ENCODE measurements at regions of chr4 and their contacts with region 1.

Region 1: DNA sequence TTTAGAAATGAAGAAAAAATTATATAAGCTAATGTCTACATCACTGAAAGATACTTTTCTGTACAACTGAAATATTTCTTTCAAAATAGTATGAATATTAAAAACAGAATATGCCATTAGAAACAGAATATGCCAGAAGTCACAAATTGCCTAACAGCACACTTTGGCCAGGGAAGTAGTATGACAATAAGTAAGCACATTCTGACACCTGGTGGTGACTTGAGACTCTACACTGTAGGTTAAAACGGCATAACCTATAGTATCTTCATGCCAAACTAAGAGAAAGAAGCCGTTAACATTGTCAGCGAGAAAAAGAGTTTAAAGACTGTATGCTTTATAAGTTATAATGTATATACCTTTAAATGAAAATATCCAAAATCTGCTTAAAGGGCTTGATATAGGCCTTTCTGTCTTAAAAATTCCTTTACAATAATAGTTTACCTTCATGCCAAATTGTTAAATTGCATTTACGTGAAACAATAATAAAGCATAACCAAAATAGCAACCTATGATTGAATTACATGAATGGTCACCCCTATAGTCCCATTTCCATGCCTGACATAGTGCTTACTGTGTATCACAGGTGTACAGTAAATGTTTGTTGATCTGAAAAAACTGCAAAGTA is 32.8 kb downstream of the FAM13A start:
- DNase-seq: peak; percentile 38
- ATAC-seq: peak; percentile 87
- H3K4me3 ChIP-seq: no peak overlapping the region
- H3K27ac ChIP-seq: no peak overlapping the region
- H3K4me1 ChIP-seq: no peaks in the 10 kb centered on the region
- H3K27me3 ChIP-seq: no peaks in the 10 kb centered on the region
- CTCF ChIP-seq: peak; percentile 58; the same call in 1 of the 2 replicates

Region 2: GRCh38 chr4:88526221-88526815 is 497.8 kb before region 1 on chr4:
- CTCF ChIA-PET with region 1: no interaction called
- POLR2A ChIA-PET with region 1: no interaction called
- in situ Hi-C with region 1: no loop called
- intact Hi-C with region 1: loop called (anchors 5 kb)
- DNase-seq: no peak
- ATAC-seq: no peak
- H3K4me3 ChIP-seq: no peak overlapping the region
- H3K27ac ChIP-seq: no peak overlapping the region
- H3K4me1 ChIP-seq: peaks cover 3% of the 10 kb centered on the region
- H3K27me3 ChIP-seq: no peaks in the 10 kb centered on the region
- CTCF ChIP-seq: peak; percentile 28; the same call in 1 of the 2 replicates

Region 3: GRCh38 chr4:88706574-88706973 is 317.6 kb before region 1 on chr4:
- CTCF ChIA-PET with region 1: interaction called, 4 read pairs
- POLR2A ChIA-PET with region 1: no interaction called
- in situ Hi-C with region 1: no loop called
- intact Hi-C with region 1: loop called (anchors 5 kb)
- DNase-seq: no peak
- ATAC-seq: no peak; the same call in 1 of the 2 replicates
- H3K4me3 ChIP-seq: no peak overlapping the region
- H3K27ac ChIP-seq: no peak overlapping the region
- H3K4me1 ChIP-seq: no peaks in the 10 kb centered on the region
- H3K27me3 ChIP-seq: no peaks in the 10 kb centered on the region
- CTCF ChIP-seq: peak; percentile 56

Region 4: DNA sequence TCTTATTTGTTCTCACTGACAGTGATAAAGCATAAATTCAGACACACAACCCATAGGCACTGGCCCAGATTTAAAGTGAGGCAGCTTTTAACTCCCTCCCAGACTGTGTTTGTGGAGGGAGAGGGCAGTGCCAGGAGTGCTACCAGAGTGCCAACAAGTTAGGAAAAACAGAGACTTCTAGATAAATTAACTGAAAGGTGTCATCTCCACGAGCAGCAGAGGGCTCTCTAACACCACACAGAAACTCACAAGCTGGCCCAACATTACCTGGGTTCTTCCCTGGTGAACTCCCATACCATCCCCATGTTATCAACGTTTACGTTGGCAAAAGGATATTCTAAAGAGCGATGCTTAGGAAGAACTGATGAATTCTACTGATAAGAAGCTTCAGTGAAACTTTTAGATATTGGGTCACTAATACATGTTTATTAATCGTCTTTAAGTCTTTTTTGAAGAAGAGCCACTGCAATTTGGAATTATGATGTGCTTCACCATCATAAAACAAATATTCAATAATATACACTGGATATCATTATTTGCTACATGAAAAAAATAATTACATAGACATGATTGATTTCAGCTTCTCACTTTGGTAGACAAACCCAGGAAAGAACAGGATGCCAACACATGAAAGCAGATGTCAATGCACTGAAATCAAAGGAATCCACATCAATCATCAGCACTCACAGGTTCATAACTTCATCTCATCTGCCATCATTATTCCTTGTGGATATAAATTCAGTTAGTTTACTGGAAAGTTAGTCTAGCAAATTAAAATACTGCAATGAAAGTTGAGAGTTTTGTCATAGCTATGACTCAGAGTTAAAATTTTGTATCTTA is 205.3 kb before region 1 on chr4:
- CTCF ChIA-PET with region 1: interaction called, 13 read pairs
- POLR2A ChIA-PET with region 1: no interaction called
- in situ Hi-C with region 1: no loop called
- intact Hi-C with region 1: loop called (anchors 1 kb)
- DNase-seq: peak; percentile 35
- ATAC-seq: peak; percentile 58
- H3K4me3 ChIP-seq: no peak overlapping the region
- H3K27ac ChIP-seq: no peak overlapping the region
- H3K4me1 ChIP-seq: no peaks in the 10 kb centered on the region
- H3K27me3 ChIP-seq: no peaks in the 10 kb centered on the region
- CTCF ChIP-seq: peak; percentile 79

Measured in Panc1 (cell line).